B cell (primary cell): ENCODE measurements at regions of chrX and their contacts with region 1.

Region 1: GRCh38 chrX:17736856-17737706 is at the start of gene SCML1:
- DNase-seq: peak; percentile 90
- ATAC-seq: peak; percentile 88
- H3K4me3 ChIP-seq: peak within 1 kb of the TSS; percentile 45 to 73 (median 65)
- H3K4me3 Mint-ChIP-seq: peak within 1 kb of the TSS; percentile 90
- H3K27ac ChIP-seq: peak within 1 kb of the TSS; percentile 75 to 81
- H3K27ac Mint-ChIP-seq: peak within 1 kb of the TSS; percentile 85
- H3K4me1 ChIP-seq: peaks cover 6 to 12% of the 10 kb centered on the region in 2 donors
- H3K4me1 Mint-ChIP-seq: peaks cover 16% of the 10 kb centered on the region
- H3K27me3 ChIP-seq: no peaks in the 10 kb centered on the region
- H3K27me3 Mint-ChIP-seq: peaks cover 6% of the 10 kb centered on the region
- CTCF ChIP-seq: no peak
- total RNA-seq, gene SCML1: 6.7 and 8.3 TPM in 2 replicates

Region 2: DNA sequence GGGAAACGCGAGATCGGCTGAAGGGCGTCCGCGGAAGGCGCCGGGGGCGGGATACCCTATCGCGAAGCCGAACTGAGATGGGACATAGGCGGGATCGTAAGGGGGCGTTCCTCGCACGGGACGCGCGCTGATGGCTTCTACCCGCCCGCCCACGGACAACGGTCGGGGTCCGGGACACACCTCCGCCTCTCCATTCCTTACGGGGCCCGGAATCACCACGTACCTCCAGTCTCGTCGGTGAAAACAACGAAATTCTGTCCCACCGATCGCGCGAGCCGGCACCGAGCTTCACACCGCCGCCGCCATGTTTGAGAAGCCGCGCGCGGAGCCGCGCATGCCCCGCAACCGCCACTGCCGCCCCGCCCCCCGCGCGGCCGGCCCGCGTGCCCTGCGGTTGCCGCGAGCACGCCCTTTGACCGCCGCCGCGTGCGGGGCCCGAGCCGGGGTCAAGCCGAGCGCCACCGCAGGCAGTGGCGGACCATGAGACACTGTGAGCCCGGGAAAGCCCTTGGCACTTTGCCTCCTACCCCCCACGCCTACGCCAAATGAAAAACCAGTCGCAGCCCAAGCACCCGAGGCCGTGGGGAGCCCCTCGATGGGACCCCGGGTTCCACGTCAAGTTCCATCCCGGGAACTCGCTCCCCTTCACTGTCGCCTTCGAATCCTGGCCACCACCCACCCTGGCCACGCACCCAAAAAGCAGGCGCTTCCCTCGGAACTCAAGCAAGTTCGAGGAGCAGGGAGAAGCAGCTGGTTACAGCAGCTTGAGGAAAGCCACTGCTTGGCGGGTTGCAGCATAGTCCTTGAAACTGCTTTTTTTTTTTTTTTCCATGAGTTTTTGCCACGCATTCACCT is 617.5 kb after region 1 on chrX and contains the start of gene SCML2:
- CTCF ChIA-PET with region 1: no interaction called
- POLR2A ChIA-PET with region 1: no interaction called
- intact Hi-C with region 1: loop called (anchors 10 kb)
- DNase-seq: peak; percentile 57
- ATAC-seq: peak; percentile 71
- H3K4me3 ChIP-seq: peak within 1 kb of the TSS in 4 of 5 experiments; percentile 46 to 62 (median 55)
- H3K4me3 Mint-ChIP-seq: peak within 1 kb of the TSS; percentile 85
- H3K27ac ChIP-seq: no peak within 1 kb of the TSS
- H3K27ac Mint-ChIP-seq: peak within 1 kb of the TSS; percentile 26
- H3K4me1 ChIP-seq: peaks cover 3 to 10% of the 10 kb centered on the region in 2 donors
- H3K4me1 Mint-ChIP-seq: peaks cover 9% of the 10 kb centered on the region
- H3K27me3 ChIP-seq: peaks cover 0 to 7% (median 7%) of the 10 kb centered on the region in 4 experiments
- H3K27me3 Mint-ChIP-seq: no peaks in the 10 kb centered on the region
- CTCF ChIP-seq: no peak
- total RNA-seq, gene SCML2: 1.3 TPM in 2 replicates

Region 3: DNA sequence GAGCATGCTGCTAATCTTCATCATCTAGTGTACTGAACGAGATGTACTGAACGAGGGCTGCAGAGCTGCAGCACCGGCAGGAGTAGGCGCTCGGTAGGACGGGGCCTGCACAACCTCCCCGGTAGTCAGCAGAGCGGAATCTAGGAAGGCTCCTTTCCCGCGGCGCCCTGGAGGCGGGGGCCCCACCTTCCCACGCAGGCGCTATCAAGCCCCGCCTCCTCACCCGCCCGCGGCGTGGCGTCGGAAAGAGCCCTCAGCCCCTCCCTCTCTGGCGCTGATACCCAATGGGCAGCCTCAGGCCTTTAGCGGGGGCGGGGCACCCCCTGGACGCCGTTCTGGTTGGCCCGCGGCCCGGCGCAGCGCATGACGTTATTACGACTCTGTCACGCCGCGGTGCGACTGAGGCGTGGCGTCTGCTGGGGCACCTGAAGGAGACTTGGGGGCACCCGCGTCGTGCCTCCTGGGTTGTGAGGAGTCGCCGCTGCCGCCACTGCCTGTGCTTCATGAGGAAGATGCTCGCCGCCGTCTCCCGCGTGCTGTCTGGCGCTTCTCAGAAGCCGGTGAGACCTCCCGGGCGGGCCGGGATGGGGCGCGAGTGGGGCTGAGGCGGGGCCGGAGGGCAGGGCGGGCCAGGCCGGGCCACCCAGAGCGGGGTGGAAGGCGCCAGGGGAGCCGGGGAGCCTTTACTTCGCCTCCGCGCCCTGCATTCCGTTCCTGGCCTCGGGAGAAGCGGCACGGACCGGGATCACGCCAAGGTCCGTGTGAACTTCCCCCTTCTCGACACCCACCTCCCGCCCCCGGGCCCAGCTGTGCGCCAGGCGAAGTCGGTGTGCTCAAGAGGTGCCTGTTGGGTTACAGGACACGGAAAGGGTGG is 1606.7 kb after region 1 on chrX and contains the start of gene PDHA1:
- CTCF ChIA-PET with region 1: no interaction called
- POLR2A ChIA-PET with region 1: no interaction called
- intact Hi-C with region 1: loop called (anchors 5 kb)
- DNase-seq: peak; percentile 93
- ATAC-seq: peak; percentile 98
- H3K4me3 ChIP-seq: peak within 1 kb of the TSS; percentile 31 to 76 (median 63)
- H3K4me3 Mint-ChIP-seq: peak within 1 kb of the TSS; percentile 92
- H3K27ac ChIP-seq: peak within 1 kb of the TSS; percentile 59 to 94
- H3K27ac Mint-ChIP-seq: peak within 1 kb of the TSS; percentile 90
- H3K4me1 ChIP-seq: peaks cover 8 to 16% of the 10 kb centered on the region in 2 donors
- H3K4me1 Mint-ChIP-seq: peaks cover 17% of the 10 kb centered on the region
- H3K27me3 ChIP-seq: no peaks in the 10 kb centered on the region
- H3K27me3 Mint-ChIP-seq: no peaks in the 10 kb centered on the region
- CTCF ChIP-seq: no peak
- total RNA-seq, gene PDHA1: 106 and 115 TPM in 2 replicates